Breast epithelium (tissue), 4 donors: ENCODE measurements at regions of chr12 and their contacts with region 1.

Region 1: DNA sequence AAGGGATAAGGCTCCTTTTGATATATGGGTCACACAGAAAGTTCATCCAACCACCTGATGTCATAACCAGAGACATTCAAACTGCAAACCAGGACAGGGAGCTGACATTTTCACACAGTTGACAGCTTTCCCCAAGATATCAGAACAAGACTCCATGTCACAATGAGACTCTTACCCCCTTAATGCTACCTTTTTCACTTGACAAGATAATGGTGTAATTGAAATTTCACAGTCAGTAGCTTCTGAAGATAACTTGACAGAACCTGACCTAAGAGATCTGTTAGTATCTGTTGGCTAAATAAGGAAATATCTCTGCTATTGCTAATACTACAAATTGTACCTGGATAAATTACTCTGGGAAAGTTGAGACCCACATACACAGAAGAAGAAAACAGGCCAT is 187.3 kb downstream of the C12orf50 start:
- DNase-seq: no peak
- H3K4me3 ChIP-seq: no peak overlapping the region
- H3K27ac ChIP-seq: no peak overlapping the region
- H3K4me1 ChIP-seq: no peaks in the 10 kb centered on the region
- H3K27me3 ChIP-seq: no peaks in the 10 kb centered on the region
- CTCF ChIP-seq: no peak
- POLR2A ChIP-seq: no peak

Region 2: GRCh38 chr12:87182696-87183233 is 659.2 kb before region 1 on chr12:
- intact Hi-C with region 1: no loop called
- DNase-seq: no peak
- H3K4me3 ChIP-seq: no peak overlapping the region
- H3K27ac ChIP-seq: no peak overlapping the region
- H3K4me1 ChIP-seq: no peaks in the 10 kb centered on the region
- H3K27me3 ChIP-seq: no peaks in the 10 kb centered on the region
- CTCF ChIP-seq: no peak
- POLR2A ChIP-seq: no peak

Region 3: DNA sequence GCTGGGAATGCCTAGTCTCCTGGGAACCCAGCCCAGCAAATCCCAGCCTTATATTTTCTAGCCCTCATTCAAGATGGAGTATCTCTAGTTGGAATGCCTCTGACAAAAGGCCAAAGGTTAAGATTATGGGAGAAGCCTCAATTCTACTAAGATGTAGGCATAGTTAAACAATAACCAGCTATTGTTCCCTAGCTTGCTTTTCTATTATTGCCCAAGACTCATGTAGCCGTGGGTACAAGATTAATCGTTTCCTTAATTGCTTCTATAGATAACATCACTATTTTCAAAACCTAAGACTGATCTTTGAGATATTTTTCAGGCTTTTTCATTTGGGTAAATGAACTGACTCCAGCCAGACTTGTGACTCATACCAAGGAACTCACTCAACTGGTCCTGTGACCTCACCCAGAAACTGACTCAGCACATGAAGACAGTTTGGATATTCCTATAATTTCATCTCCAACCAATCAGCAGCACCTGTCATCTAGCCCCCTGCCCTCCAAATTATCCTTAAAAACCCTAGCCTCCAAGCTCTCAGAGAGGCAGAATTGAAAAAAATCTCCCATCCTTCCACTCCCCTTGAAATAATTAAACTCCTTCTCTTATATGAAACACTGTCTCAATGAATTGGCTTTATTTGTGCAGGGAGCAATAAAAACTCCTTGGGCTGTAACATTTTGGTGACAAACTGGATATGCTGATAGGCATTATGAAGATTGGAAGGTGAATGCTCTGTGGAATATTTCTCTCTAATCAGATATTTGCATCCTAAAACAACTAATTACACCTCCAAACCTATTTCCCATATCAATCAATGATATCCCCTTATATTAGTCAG is 401.7 kb before region 1 on chr12:
- intact Hi-C with region 1: loop called (anchors 5 kb)
- DNase-seq: peak in 1 of 2 donors; percentile 58
- H3K4me3 ChIP-seq: no peak overlapping the region
- H3K27ac ChIP-seq: peak overlapping the region; percentile 57 to 74
- H3K4me1 ChIP-seq: no peaks in the 10 kb centered on the region
- H3K27me3 ChIP-seq: no peaks in the 10 kb centered on the region
- CTCF ChIP-seq: no peak
- POLR2A ChIP-seq: no peak